ENCODE measurements at regions of chr10 and their contacts with region 1.

Region 1: GRCh38 chr10:44932517-44933450 is 21.6 kb downstream of the TMEM72 start:
- DNase-seq: peak; percentile 76
- ATAC-seq: peak; percentile 92
- H3K4me3 ChIP-seq: peak overlapping the region in 1 of 3 experiments; percentile 45; a peak in 2 of 6 replicates
- H3K27ac ChIP-seq: no peak overlapping the region
- H3K4me1 ChIP-seq: peaks cover 71% of the 10 kb centered on the region
- H3K27me3 ChIP-seq: no peaks in the 10 kb centered on the region
- CTCF ChIP-seq: peak; percentile 100
- EP300 ChIP-seq: no peak
- POLR2A ChIP-seq: no peak
- RAD21 ChIP-seq: peak; percentile 99

Region 2: GRCh38 chr10:44890696-44891563 is 41.9 kb before region 1 on chr10:
- CTCF ChIA-PET with region 1: no interaction called
- POLR2A ChIA-PET with region 1: no interaction called
- in situ Hi-C with region 1: no loop called
- intact Hi-C with region 1: no loop called
- DNase-seq: no peak
- ATAC-seq: no peak; the same call in 2 of the 3 replicates
- H3K4me3 ChIP-seq: no peak overlapping the region
- H3K27ac ChIP-seq: no peak overlapping the region
- H3K4me1 ChIP-seq: no peaks in the 10 kb centered on the region
- H3K27me3 ChIP-seq: 0 out of 5 replicates have a peak, but pooled peaks cover 0 to 7% of the 10 kb centered on the region in 2 experiments
- CTCF ChIP-seq: no peak
- EP300 ChIP-seq: no peak
- POLR2A ChIP-seq: no peak
- RAD21 ChIP-seq: no peak

Region 3: DNA sequence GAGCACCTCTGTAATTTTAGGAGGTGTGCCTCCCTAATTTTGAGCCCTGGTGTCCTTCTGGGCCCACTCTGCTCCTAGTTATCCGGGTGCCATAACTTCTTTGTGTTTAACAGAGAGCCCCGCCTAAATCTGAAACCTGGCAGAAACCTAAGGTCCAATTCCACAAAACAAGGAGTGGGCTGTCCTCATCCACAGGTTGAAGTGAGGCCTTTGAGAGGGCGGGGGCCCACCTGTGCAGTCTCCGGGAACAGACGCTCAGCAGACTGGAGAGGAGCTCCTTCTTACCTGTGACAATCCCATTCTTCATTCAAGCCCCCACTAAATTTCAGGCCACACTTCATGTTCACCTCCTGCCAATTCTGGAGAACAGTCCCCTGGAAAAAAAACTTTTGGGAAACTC is 10.8 kb before region 1 on chr10:
- CTCF ChIA-PET with region 1: no interaction called
- POLR2A ChIA-PET with region 1: no interaction called
- in situ Hi-C with region 1: no loop called
- intact Hi-C with region 1: no loop called
- DNase-seq: no peak
- ATAC-seq: no peak
- H3K4me3 ChIP-seq: no peak overlapping the region
- H3K27ac ChIP-seq: no peak overlapping the region
- H3K4me1 ChIP-seq: peaks cover 26% of the 10 kb centered on the region
- H3K27me3 ChIP-seq: peaks cover 3 to 5% of the 10 kb centered on the region in 2 experiments; a peak in 2 of 5 replicates
- CTCF ChIP-seq: no peak
- EP300 ChIP-seq: no peak
- POLR2A ChIP-seq: no peak
- RAD21 ChIP-seq: no peak

Region 4: DNA sequence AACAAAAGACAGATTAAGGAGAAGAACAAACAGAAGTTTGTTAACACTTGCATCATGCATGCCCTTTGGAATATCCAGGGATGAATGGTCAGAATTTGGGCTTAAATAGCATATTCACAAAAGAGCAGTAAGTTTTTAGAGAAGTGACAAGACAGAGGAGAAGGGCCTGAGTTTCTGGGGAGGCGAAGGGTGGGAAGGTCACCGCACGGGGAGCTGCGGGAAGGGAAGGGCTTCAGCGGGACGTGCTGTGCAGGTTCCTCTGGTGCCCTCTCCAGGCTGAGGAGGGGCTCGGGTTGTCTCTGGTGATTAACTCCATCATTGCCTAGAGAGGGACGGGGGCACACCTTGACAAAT is 57.5 kb after region 1 on chr10:
- CTCF ChIA-PET with region 1: interaction called, 16 read pairs
- POLR2A ChIA-PET with region 1: interaction called, 36 read pairs
- in situ Hi-C with region 1: no loop called
- intact Hi-C with region 1: loop called (anchors 5 kb)
- DNase-seq: peak; percentile 71
- ATAC-seq: peak; percentile 86
- H3K4me3 ChIP-seq: 0 out of 6 replicates have a peak overlapping the region, but pooled peaks of 1 of the 3 experiments have one; percentile 0
- H3K27ac ChIP-seq: peak overlapping the region; percentile 55
- H3K4me1 ChIP-seq: peaks cover 75% of the 10 kb centered on the region
- H3K27me3 ChIP-seq: no peaks in the 10 kb centered on the region
- CTCF ChIP-seq: peak; percentile 78
- EP300 ChIP-seq: peak in 1 of 2 experiments; percentile 88; a peak in 2 of 4 replicates
- POLR2A ChIP-seq: no peak
- RAD21 ChIP-seq: peak; percentile 81

Region 5: GRCh38 chr10:45000752-45001380 is 68.1 kb after region 1 on chr10 and contains the start of gene ZNF22:
- CTCF ChIA-PET with region 1: no interaction called
- POLR2A ChIA-PET with region 1: interaction called, 36 read pairs
- in situ Hi-C with region 1: no loop called
- intact Hi-C with region 1: no loop called
- DNase-seq: no peak
- ATAC-seq: no peak
- H3K4me3 ChIP-seq: no peak within 1 kb of the TSS
- H3K27ac ChIP-seq: peak within 1 kb of the TSS; percentile 31
- H3K4me1 ChIP-seq: peaks cover 95% of the 10 kb centered on the region
- H3K27me3 ChIP-seq: no peaks in the 10 kb centered on the region
- CTCF ChIP-seq: no peak
- EP300 ChIP-seq: no peak
- POLR2A ChIP-seq: no peak
- RAD21 ChIP-seq: no peak
- total RNA-seq, gene ZNF22: 0.40 and 0.58 TPM in 2 replicates

Region 6: DNA sequence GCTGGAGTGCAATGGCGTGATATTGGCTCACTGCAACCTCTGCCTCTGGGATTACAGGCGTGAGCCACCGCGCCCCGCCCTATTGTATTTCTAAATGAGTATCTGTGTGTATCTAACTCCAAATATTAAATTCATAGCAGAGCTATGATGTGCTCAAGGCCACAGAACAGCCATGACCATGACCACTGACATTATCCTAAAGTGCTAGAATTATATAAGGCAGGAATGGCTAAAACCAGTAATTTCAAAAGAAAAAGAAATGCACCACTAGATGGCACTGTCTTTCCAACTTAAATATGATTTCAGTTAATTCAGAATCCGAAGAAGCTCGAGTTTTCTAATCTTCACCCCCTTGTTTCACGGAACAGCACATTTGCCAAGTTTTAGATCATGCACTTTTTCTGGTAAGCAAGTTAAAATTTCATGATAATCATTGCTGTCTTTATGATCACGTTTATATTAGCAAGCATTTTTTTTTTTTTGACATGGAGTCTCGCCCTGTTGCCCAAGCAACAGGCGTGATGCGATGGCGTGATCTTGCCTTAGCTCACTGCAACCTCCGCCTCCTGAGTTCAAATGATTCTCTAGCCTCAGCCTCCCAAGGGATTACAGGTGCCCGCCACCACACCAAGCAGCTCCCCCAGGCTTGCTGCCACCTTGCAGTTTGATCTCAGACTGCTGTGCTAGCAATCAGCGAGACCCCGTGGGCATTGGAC is 317.4 kb after region 1 on chr10:
- CTCF ChIA-PET with region 1: no interaction called
- POLR2A ChIA-PET with region 1: no interaction called
- in situ Hi-C with region 1: no loop called
- intact Hi-C with region 1: no loop called
- DNase-seq: peak; percentile 53
- ATAC-seq: peak; percentile 35; the same call in 2 of the 3 replicates
- H3K4me3 ChIP-seq: no peak overlapping the region
- H3K27ac ChIP-seq: no peak overlapping the region
- H3K4me1 ChIP-seq: peaks cover 8% of the 10 kb centered on the region; the same call in 1 of the 2 replicates
- H3K27me3 ChIP-seq: no peaks in the 10 kb centered on the region
- CTCF ChIP-seq: peak; percentile 62
- EP300 ChIP-seq: no peak
- POLR2A ChIP-seq: no peak
- RAD21 ChIP-seq: no peak

Measured in HepG2 (cell line).